CD8-positive, alpha-beta T cell (primary cell): ENCODE measurements at regions of chr22 and their contacts with region 1.

Region 1: DNA sequence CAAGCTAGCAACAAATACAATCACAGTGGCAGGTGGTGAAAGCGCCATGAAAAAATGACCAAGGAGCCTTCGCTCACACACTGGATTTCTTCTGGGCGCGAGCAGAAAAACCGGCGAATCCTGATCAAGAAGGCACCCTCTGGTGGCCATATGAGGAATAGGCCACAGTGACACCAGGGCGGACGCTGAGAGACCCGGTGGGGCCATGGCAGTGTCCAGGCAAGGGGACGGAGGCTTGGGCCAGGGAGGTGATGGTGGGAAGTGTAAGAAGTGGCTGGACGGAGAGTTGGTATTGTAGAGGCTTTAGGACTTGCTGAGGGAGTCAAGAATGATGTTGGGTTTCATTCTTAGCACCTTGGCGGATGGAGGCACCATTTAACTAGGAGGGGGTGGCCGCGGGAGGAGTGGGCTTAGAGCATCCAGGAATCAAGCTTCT is 16.9 kb upstream of the RAC2 start:
- DNase-seq: peak in 7 of 9 experiments; percentile 44 to 82 (median 66)
- ATAC-seq: peak; percentile 90
- H3K4me3 ChIP-seq: no peak overlapping the region
- H3K4me3 Mint-ChIP-seq: peak overlapping the region; percentile 1
- H3K27ac ChIP-seq: no peak overlapping the region
- H3K27ac Mint-ChIP-seq: no peak overlapping the region
- H3K4me1 ChIP-seq: peaks cover 23% of the 10 kb centered on the region
- H3K4me1 Mint-ChIP-seq: peaks cover 21% of the 10 kb centered on the region
- H3K27me3 ChIP-seq: no peaks in the 10 kb centered on the region
- H3K27me3 Mint-ChIP-seq: no peaks in the 10 kb centered on the region
- CTCF ChIP-seq: peak; percentile 97

Region 2: DNA sequence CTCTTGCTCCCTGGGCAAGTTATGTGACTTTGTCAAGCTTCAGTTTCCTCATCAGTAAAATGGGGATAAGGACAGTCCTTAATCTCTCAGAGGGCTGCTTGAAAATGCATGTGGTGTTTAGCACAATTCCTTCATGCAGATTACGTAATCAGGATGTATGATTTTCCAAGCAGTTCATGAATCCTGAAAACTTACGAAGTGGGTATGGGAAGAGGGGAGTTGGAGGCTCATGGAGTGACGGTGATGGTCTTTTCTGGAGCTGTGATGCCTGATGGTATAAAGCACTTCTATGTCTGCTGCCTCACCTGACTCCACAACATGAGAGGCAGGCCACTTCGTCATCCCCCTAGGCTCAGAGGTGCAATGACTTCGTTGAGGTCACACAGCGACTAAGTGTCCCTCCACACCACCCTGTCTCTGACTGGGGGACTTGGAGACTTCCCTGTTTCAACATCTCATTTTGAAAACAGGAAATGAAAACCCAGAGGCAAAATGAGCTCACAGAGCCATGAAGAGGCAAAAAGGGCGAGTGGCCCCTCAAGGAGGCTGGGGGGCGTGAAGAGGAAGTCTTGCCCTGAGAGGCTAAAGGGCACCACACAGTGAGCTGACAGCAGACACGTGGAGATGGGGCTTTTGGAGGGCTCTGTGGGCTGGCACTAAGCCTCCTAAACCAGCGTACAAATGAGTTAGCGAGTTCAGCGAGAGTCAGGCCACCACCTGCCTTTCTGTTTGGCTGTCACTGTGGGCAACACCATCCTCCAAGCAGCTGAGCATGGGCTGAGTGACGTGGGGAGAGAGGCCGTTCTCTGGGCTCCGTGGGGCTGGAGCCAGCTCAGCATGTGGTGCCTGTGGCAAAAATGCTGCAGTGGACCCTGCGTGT is 1850.9 kb before region 1 on chr22:
- CTCF ChIA-PET with region 1: no interaction called
- POLR2A ChIA-PET with region 1: no interaction called
- intact Hi-C with region 1: no loop called
- DNase-seq: peak in 4 of 9 experiments; percentile 15 to 69 (median 49)
- ATAC-seq: peak; percentile 81
- H3K4me3 ChIP-seq: no peak overlapping the region
- H3K4me3 Mint-ChIP-seq: no peak overlapping the region
- H3K27ac ChIP-seq: peak overlapping the region in 1 of 2 experiments; percentile 35
- H3K27ac Mint-ChIP-seq: peak overlapping the region; percentile 71
- H3K4me1 ChIP-seq: peaks cover 5% of the 10 kb centered on the region
- H3K4me1 Mint-ChIP-seq: peaks cover 10% of the 10 kb centered on the region
- H3K27me3 ChIP-seq: no peaks in the 10 kb centered on the region
- H3K27me3 Mint-ChIP-seq: no peaks in the 10 kb centered on the region
- CTCF ChIP-seq: no peak

Region 3: GRCh38 chr22:36816636-36817524 is 444.0 kb before region 1 on chr22 and contains the start of gene PVALB:
- CTCF ChIA-PET with region 1: no interaction called
- POLR2A ChIA-PET with region 1: no interaction called
- intact Hi-C with region 1: no loop called
- DNase-seq: peak in 1 of 9 experiments; percentile 13
- ATAC-seq: no peak
- H3K4me3 ChIP-seq: no peak within 1 kb of the TSS
- H3K4me3 Mint-ChIP-seq: peak within 1 kb of the TSS; percentile 18
- H3K27ac ChIP-seq: no peak within 1 kb of the TSS
- H3K27ac Mint-ChIP-seq: no peak within 1 kb of the TSS
- H3K4me1 ChIP-seq: peaks cover 16% of the 10 kb centered on the region
- H3K4me1 Mint-ChIP-seq: peaks cover 4% of the 10 kb centered on the region
- H3K27me3 ChIP-seq: peaks cover 8 to 24% of the 10 kb centered on the region in 2 experiments
- H3K27me3 Mint-ChIP-seq: peaks cover 63% of the 10 kb centered on the region
- CTCF ChIP-seq: no peak
- total RNA-seq, gene PVALB: not detected

Region 4: DNA sequence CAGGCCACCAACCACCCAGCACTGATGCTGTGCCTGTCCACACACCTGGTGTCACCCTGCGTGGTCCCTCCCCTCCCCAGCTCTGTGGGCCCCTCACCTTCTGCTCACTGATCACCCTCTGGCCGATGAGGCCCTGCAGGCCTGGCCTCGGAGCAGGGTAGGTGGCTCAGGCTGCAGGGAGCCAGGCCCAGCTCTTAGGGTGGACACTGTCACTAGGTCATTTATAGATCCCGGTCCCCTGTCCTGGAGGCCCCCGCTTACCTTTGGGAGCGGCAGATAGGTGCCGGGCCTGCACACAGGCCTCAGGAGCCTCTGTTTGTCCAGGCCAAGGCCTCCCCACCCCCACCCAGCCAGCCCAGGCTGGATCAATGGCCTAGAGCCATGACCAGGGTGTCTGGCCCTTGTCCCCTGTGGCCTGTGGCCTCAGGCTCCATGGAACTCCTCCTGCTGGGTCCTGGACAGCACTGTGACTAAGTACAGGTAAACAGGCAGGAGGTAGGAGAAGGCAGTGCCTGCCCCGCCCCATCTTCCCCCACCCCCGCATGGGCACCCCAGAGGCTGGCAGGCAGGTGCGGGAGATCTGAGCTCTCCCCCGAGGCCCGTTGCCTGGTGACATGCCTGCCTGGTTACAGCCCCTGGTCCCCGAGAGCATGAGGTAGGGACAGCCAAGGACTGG is 151.5 kb before region 1 on chr22 and contains the start of gene TMPRSS6:
- CTCF ChIA-PET with region 1: no interaction called
- POLR2A ChIA-PET with region 1: no interaction called
- intact Hi-C with region 1: no loop called
- DNase-seq: no peak
- ATAC-seq: no peak
- H3K4me3 ChIP-seq: no peak within 1 kb of the TSS
- H3K4me3 Mint-ChIP-seq: no peak within 1 kb of the TSS
- H3K27ac ChIP-seq: no peak within 1 kb of the TSS
- H3K27ac Mint-ChIP-seq: no peak within 1 kb of the TSS
- H3K4me1 ChIP-seq: no peaks in the 10 kb centered on the region
- H3K4me1 Mint-ChIP-seq: no peaks in the 10 kb centered on the region
- H3K27me3 ChIP-seq: no peaks in the 10 kb centered on the region
- H3K27me3 Mint-ChIP-seq: no peaks in the 10 kb centered on the region
- CTCF ChIP-seq: no peak
- total RNA-seq, gene TMPRSS6: 0.27 to 0.58 TPM

Region 5: GRCh38 chr22:37121887-37122591 is 138.9 kb before region 1 on chr22:
- CTCF ChIA-PET with region 1: interaction called, 20 read pairs
- POLR2A ChIA-PET with region 1: no interaction called
- intact Hi-C with region 1: no loop called
- DNase-seq: peak; percentile 81 to 99 (median 89)
- ATAC-seq: peak; percentile 95
- H3K4me3 ChIP-seq: peak overlapping the region; percentile 18 to 34
- H3K4me3 Mint-ChIP-seq: peak overlapping the region; percentile 71
- H3K27ac ChIP-seq: peak overlapping the region; percentile 93 to 98
- H3K27ac Mint-ChIP-seq: peak overlapping the region; percentile 99
- H3K4me1 ChIP-seq: peaks cover 36% of the 10 kb centered on the region
- H3K4me1 Mint-ChIP-seq: peaks cover 55% of the 10 kb centered on the region
- H3K27me3 ChIP-seq: no peaks in the 10 kb centered on the region
- H3K27me3 Mint-ChIP-seq: no peaks in the 10 kb centered on the region
- CTCF ChIP-seq: no peak

Region 6: DNA sequence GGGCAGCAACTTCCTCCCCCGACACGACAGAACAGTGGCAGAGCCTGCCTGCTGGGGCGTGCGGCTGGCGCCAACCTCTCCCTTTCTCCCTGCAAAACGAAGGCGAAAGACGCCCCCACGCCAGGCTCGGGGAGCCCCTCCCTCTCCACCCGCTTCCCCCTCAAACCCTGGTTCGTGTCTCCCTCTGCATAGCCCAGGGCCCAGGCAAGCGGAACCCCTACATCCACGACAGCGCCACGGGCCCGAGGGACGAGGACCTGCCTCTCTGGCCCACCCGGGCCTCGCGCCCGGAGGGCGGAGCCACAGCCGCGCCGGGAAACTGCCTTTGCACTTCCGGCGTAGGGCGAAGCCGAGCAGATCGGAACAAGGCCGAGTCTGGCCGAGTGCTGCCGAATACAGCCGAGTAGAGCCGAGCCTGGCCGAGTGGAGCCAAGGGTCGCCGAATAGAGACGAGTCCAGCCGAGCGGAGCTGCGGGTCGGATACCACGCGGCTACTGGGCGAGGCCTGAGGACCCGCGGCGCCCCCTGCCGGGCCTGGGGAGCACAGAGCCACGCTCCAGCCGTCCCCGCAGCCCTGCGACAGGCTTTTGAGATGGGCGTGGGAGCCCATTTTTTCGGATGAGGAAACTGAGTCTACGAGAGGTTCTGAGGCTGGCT is 61.7 kb before region 1 on chr22:
- CTCF ChIA-PET with region 1: interaction called, 48 read pairs
- POLR2A ChIA-PET with region 1: interaction called, 7 read pairs
- intact Hi-C with region 1: loop called (anchors 1 kb)
- DNase-seq: peak; percentile 96 to 100 (median 99)
- ATAC-seq: peak; percentile 92
- H3K4me3 ChIP-seq: peak overlapping the region; percentile 57 to 73
- H3K4me3 Mint-ChIP-seq: peak overlapping the region; percentile 85
- H3K27ac ChIP-seq: peak overlapping the region; percentile 67 to 95
- H3K27ac Mint-ChIP-seq: peak overlapping the region; percentile 95
- H3K4me1 ChIP-seq: peaks cover 61% of the 10 kb centered on the region
- H3K4me1 Mint-ChIP-seq: peaks cover 70% of the 10 kb centered on the region
- H3K27me3 ChIP-seq: no peaks in the 10 kb centered on the region
- H3K27me3 Mint-ChIP-seq: no peaks in the 10 kb centered on the region
- CTCF ChIP-seq: peak; percentile 87

Region 7: DNA sequence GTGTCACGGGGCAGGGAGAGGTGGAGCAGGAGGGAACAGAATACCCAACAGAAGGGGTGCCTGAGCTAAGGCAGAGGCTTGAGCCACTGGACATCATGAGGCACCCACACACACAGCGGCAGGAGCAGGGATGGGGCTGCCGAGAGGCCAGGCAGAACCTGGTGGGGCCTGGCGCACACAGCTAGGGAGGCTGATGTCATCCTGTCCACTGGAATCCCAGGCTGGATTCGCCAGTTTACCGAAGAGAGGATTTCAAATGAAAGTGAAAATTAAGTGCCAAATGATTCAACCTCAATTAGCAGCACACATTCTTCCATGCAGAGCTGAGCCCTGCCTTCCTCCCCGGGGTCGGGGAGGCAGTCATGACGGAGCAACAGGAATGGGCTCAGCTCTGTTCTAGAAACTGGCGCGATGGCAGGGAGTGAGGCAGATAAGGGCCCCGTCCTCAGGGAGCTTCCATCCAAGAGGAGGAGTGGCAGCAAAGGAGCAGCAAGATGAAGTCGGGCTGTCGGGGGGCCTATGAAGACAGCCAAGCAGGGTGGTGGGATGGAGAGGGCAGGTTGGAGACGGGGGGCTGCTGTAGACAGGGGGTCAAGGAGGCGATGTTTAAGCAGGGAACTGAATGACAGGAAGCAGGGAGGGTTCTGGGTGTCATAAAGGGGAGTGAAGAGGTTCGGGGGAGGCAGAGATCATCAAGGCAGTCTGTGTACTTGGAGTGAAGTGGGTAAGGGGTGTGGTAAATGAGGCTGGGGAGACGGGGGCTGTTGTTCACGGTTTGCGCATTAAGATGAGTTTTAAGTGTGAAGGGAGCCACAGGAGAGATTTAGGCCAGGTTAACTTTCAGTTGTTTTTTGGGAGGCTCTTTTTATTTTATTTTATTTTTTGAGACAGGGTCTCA is 23.3 kb before region 1 on chr22:
- CTCF ChIA-PET with region 1: interaction called, 401 read pairs
- POLR2A ChIA-PET with region 1: interaction called, 41 read pairs
- intact Hi-C with region 1: loop called (anchors 1 kb)
- DNase-seq: peak in 6 of 9 experiments; percentile 23 to 70 (median 52)
- ATAC-seq: peak; percentile 20
- H3K4me3 ChIP-seq: peak overlapping the region; percentile 39 to 50
- H3K4me3 Mint-ChIP-seq: peak overlapping the region; percentile 82
- H3K27ac ChIP-seq: peak overlapping the region; percentile 59 to 81
- H3K27ac Mint-ChIP-seq: peak overlapping the region; percentile 100
- H3K4me1 ChIP-seq: peaks cover 97% of the 10 kb centered on the region
- H3K4me1 Mint-ChIP-seq: peaks cover 98% of the 10 kb centered on the region
- H3K27me3 ChIP-seq: no peaks in the 10 kb centered on the region
- H3K27me3 Mint-ChIP-seq: no peaks in the 10 kb centered on the region
- CTCF ChIP-seq: no peak

Region 8: DNA sequence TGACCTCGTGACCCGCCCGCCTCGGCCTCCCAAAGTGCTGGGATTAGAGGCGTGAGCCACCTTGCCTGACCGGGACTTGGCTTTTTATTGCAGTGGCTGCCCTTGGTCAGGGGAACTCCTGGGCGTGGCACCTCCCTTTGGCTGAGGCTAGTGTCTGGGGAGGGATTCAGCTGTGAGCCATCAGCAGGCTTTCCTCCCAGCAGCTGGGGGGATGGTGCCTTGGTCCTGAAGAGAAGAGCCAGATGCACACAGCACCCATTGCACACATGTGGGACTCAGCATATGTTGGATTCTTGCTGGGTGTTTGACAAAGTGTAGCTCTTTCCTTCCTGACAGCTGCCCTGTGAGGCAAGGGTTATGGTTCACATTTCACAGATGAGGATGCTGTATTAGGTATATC is 29.8 kb after region 1 on chr22:
- CTCF ChIA-PET with region 1: interaction called, 15 read pairs
- POLR2A ChIA-PET with region 1: no interaction called
- intact Hi-C with region 1: no loop called
- DNase-seq: peak in 1 of 9 experiments; percentile 3
- ATAC-seq: no peak
- H3K4me3 ChIP-seq: no peak overlapping the region
- H3K4me3 Mint-ChIP-seq: no peak overlapping the region
- H3K27ac ChIP-seq: no peak overlapping the region
- H3K27ac Mint-ChIP-seq: peak overlapping the region; percentile 55
- H3K4me1 ChIP-seq: peaks cover 47% of the 10 kb centered on the region
- H3K4me1 Mint-ChIP-seq: peaks cover 83% of the 10 kb centered on the region
- H3K27me3 ChIP-seq: no peaks in the 10 kb centered on the region
- H3K27me3 Mint-ChIP-seq: no peaks in the 10 kb centered on the region
- CTCF ChIP-seq: no peak

Region 9: DNA sequence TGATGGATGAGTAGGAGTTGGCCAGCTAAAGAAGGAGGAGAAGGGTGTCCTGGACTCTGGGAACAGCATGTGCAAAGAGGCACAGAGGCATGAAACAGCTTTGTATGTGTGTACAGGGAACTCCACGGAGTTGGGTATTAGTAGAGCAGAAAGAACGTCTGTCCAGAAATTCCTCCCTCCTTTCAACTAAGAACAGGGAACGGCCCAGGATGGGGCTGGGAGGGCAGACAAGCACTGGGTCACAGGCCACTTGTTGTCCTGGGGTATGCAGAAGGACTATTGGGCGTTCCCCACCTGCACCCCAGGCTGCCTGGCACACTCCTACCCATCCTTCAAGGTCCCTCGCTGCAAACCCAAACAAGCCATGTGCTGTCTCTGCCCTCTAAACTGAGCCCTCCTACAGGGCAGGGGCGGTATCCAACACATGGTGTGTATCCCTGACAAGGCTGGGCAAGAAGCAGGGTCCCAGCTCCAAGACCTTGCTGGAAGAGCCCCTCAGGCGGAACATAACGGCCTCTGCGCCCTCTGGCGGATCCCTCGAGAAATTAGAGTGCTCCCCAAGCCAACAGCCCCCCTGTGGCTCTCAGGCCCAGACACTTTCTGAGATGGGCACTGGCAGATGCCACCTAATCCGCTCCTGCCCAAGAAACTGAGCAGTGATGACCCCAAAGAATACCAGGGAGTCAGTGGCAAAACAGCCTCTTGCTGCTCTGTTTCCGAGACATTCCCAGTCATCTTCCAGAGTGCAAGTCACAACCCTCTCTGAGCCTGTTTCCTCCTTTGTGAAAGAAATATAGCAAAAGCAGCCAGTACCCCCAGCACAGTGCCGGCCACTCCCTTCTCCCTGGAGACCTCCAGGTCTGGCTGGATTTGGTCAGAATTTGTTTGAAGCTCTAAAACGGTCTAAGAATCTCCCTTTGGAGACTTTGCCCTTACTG is 168.0 kb after region 1 on chr22:
- CTCF ChIA-PET with region 1: interaction called, 40 read pairs
- POLR2A ChIA-PET with region 1: no interaction called
- intact Hi-C with region 1: no loop called
- DNase-seq: peak; percentile 30 to 80 (median 65)
- ATAC-seq: peak; percentile 62
- H3K4me3 ChIP-seq: no peak overlapping the region
- H3K4me3 Mint-ChIP-seq: peak overlapping the region; percentile 22
- H3K27ac ChIP-seq: no peak overlapping the region
- H3K27ac Mint-ChIP-seq: no peak overlapping the region
- H3K4me1 ChIP-seq: peaks cover 17% of the 10 kb centered on the region
- H3K4me1 Mint-ChIP-seq: peaks cover 22% of the 10 kb centered on the region
- H3K27me3 ChIP-seq: peaks cover 17 to 25% of the 10 kb centered on the region in 2 experiments
- H3K27me3 Mint-ChIP-seq: peaks cover 54% of the 10 kb centered on the region
- CTCF ChIP-seq: peak; percentile 54

Region 10: GRCh38 chr22:37708580-37709444 is 447.9 kb after region 1 on chr22:
- CTCF ChIA-PET with region 1: no interaction called
- POLR2A ChIA-PET with region 1: no interaction called
- intact Hi-C with region 1: no loop called
- DNase-seq: no peak
- ATAC-seq: no peak
- H3K4me3 ChIP-seq: no peak overlapping the region
- H3K4me3 Mint-ChIP-seq: no peak overlapping the region
- H3K27ac ChIP-seq: no peak overlapping the region
- H3K27ac Mint-ChIP-seq: no peak overlapping the region
- H3K4me1 ChIP-seq: no peaks in the 10 kb centered on the region
- H3K4me1 Mint-ChIP-seq: no peaks in the 10 kb centered on the region
- H3K27me3 ChIP-seq: no peaks in the 10 kb centered on the region
- H3K27me3 Mint-ChIP-seq: no peaks in the 10 kb centered on the region
- CTCF ChIP-seq: no peak